Activated T-helper 1 cell treated with anti-CD3 and anti-CD28 coated beads, Interleukin-12 subunit alpha, Interleukin-12 subunit beta, Interleukin-2, Interleukin-4 antibody, amounts not matched to agents 30 ng/mL and 10 ng/mL and 1 ng/mL, durations not matched to agents 14 hours and 24 hours and 36 hours (primary cell): ENCODE measurements at regions of chr22 and their contacts with region 1.

Region 1: DNA sequence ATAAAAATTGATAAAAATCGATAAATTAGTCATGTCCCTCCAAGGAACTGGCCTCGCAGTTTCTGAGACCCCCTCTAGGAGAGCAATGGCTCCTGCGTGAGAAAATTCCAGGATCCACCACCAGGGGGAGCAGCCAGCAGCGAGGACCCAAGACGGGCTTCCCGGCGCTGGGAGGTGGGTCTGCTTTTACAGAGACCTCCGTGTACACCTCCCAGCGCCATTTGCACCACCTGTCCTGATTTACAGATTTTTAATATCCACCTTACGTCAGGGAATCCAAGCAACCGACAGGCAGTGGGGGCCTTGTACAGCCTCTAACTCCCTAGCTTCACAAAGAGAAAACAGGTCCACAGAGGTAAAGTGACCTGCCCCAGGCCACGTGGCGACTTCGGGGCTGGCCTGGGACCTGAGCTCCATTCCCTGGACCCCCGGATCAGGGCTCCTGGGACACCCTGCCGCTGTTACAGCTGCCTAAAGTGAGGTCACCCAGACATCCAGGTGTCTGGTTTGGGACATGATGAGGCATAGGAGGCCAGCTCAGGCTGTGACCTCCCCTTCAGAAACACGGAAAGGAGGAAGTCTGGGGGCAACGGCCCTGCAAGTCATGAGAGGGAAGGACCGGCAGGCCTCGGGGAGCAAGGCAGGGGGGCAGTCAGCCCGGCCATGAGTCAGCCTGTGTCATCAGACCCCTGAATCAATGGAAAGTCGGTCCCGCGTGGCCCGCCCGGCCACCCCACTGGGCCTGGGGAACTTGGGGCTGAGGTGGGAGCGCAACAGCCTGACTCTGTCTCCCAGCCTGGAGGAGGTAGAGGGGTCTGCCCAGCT is 3.5 kb downstream of the OSM start:
- DNase-seq: peak; percentile 67
- H3K4me3 Mint-ChIP-seq: peak overlapping the region; percentile 95
- H3K27ac Mint-ChIP-seq: peak overlapping the region; percentile 94
- H3K4me1 Mint-ChIP-seq: peaks cover 64% of the 10 kb centered on the region
- H3K27me3 Mint-ChIP-seq: no peaks in the 10 kb centered on the region

Region 2: DNA sequence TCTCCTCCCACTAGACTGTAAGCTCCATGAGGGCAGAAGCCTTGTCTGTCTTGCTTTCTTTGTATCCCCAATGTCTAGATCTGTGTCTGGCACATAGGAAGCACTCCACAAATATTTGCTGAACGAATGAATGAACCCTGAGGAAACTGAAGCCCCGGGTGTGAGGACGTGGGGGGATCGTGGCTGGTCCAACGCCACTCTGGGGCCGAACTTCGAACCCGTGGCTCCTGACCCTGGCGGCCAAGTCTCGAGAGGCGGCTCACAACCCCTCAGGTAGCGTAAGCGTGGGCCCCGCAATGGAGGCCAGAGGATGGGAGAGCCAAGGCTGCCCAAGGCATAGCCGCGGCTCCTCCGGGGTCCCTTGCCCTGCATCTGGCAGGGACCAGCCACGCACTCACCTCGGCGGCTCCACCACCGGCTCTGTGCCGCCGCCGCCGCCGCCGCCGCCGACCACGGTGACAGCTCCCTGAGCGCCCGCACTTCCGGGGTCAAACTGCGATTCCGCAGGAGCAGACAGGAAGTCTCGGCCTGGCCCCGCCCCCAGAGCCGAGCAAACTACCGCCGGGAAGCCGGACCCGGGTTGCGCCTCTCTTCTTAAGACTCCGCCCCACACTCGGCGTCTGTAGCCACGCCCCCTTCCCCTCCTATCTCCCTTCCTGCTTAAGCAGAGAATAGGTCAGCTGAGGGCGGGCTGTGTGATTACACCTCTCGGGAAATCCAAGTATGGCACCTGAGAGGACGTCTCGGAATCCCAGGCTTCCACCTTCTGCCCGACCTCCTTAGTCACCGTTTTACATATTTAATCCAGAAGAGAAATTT is 425.1 kb before region 1 on chr22 and contains the start of gene ASCC2:
- intact Hi-C with region 1: loop called (anchors 2 kb)
- DNase-seq: peak; percentile 99
- H3K4me3 Mint-ChIP-seq: peak within 1 kb of the TSS; percentile 89
- H3K27ac Mint-ChIP-seq: peak within 1 kb of the TSS; percentile 86
- H3K4me1 Mint-ChIP-seq: peaks cover 33% of the 10 kb centered on the region
- H3K27me3 Mint-ChIP-seq: peaks cover 5% of the 10 kb centered on the region
- total RNA-seq, gene ASCC2: 84.5 and 90.9 TPM in 2 replicates

Region 3: DNA sequence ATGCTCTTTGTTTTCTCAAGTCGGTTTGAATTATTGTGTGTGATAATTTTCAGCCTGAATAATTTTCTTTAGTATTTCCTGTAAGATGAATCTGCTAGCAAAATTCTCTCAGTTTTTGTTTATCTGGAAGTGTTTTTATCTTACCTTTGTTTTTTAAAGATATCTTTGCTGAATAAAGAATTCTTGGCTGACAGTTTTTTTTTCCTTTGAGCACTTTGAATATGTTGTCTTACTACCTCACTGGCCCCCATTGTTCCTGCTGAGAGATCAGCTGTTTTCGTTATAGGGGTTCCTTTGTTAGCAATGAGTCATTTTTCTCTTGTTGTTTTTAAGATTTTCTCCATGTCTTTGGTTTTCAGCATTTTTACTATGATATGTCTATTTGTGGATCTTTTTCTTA is 119.9 kb before region 1 on chr22:
- intact Hi-C with region 1: no loop called
- DNase-seq: no peak
- H3K4me3 Mint-ChIP-seq: no peak overlapping the region
- H3K27ac Mint-ChIP-seq: no peak overlapping the region
- H3K4me1 Mint-ChIP-seq: peaks cover 4% of the 10 kb centered on the region
- H3K27me3 Mint-ChIP-seq: no peaks in the 10 kb centered on the region

Region 4: DNA sequence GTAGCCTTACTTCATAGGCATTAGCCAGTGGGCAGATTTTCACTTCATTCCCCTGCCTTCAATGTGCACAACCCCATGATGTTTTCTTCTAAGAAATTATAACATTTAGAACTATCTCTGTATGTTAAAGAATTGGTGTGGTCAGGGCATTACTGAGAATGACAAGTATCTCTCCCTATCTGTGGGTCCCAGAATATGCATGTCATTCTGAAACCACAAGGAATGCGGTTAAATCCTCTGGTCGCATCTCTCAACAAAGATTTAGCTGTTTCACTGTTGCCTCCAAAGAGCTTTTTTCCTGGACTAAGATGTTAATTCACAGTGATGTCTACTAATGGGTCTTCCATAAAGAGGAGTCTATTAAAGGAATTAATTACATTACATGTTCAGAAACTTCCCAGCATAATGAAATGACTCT is 79.3 kb before region 1 on chr22:
- intact Hi-C with region 1: loop called (anchors 2 kb)
- DNase-seq: peak; percentile 25
- H3K4me3 Mint-ChIP-seq: peak overlapping the region; percentile 69
- H3K27ac Mint-ChIP-seq: peak overlapping the region; percentile 95
- H3K4me1 Mint-ChIP-seq: peaks cover 96% of the 10 kb centered on the region
- H3K27me3 Mint-ChIP-seq: no peaks in the 10 kb centered on the region

Region 5: DNA sequence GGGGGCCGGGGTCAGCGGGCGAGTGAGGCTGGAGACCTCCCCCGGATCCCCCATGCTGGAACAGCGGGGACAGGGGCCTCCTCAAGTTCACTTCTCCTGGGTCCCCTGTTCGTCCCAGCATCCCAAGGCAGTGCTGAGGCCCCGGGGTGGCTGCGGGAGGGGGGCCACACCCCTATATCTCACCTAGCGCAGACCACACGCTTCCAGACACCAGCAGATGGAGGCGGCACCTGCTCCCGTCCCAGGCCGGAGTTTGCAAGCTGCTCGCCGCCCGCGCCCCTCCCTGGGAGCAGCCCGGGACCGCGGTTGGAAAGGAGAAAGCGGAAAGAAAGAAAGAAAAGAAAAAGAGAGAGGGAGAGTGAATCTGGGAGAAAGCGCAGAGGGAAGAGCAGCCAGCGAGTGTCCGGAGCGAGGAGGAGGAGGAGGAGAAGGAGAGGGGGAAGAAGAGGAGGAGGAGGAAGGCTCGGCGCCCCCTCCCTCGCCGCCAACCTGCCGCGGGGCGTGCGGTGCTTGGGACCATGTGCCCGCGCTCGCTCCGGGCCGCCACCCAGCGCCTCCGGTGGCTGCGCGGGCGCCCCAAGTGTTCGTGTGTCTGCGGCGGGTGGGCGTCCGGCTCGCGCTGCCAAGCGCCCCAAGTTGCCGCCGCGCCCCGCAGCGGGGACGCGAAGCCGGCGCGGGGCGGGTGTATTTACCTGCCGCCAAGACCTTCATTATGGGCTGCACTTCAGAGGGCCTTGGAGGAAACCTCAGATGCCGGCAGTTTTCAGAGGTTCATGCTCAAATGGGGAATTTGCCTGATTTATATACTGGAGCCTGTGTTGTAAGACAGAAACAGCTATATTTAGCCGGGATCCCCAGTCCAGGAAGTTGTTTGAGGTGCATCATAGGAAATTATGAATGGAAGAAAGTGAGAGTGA is 16.9 kb before region 1 on chr22 and contains the start of gene LIF:
- intact Hi-C with region 1: loop called (anchors 1 kb)
- DNase-seq: peak; percentile 53
- H3K4me3 Mint-ChIP-seq: peak within 1 kb of the TSS; percentile 100
- H3K27ac Mint-ChIP-seq: peak within 1 kb of the TSS; percentile 100
- H3K4me1 Mint-ChIP-seq: peaks cover 64% of the 10 kb centered on the region
- H3K27me3 Mint-ChIP-seq: no peaks in the 10 kb centered on the region
- total RNA-seq, gene LIF: 450 and 455 TPM in 2 replicates

Region 6: DNA sequence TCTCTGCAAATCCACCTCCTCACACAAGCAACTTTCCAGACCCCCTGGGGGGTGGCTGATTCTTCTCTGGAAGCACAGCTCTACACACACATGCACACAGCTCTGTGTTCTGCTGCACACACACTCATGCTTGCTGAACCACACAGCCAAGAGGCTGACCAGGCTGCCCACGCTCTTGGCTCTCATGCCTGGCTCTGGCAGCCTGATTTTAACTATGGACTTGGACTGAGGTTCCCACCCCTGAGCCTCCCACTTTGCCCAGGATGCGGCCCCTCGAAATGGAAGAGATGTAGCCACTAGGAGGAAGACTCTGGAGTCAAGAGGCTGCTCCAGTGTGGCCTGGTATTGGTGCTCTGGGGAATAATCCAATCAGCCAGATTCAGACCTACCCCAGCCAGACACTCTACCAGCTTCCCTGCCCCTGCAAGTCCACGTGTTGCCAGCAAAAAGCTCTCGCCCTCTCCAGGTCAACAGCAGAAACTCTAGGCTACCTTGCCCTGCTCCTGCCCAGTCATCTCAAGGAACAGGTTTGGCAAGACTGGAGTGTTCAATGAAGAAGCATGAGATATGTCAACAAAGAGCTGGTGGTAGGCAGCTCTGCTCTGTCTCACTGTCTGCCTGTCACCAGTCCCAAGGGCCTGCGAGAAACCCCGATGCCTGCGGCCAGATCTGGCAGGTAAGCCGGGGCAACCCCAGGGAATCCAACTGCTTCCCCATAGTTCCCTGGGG is 35.0 kb after region 1 on chr22:
- intact Hi-C with region 1: no loop called
- DNase-seq: no peak
- H3K4me3 Mint-ChIP-seq: no peak overlapping the region
- H3K27ac Mint-ChIP-seq: peak overlapping the region; percentile 23
- H3K4me1 Mint-ChIP-seq: peaks cover 57% of the 10 kb centered on the region
- H3K27me3 Mint-ChIP-seq: no peaks in the 10 kb centered on the region

Region 7: DNA sequence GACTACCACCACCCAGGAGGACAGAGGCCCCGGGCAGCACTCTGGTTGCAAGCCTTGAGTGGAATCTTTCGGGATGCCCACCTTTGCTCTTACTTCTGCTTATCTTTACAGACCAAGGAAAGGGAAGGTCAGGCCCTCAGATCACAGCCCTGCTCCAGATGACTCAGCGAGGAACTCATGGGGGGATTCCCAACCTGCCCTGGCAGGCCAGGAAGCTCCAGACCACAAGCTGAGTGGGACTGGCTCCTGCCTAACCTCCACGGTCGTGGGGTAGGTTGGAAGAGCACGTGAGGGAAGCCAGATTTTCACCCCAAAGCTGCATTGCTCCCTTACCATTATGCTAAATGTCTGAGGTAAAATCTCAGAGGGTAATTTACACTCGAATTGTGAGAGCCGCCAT is 51.8 kb after region 1 on chr22:
- intact Hi-C with region 1: no loop called
- DNase-seq: peak; percentile 36
- H3K4me3 Mint-ChIP-seq: peak overlapping the region; percentile 45
- H3K27ac Mint-ChIP-seq: peak overlapping the region; percentile 66
- H3K4me1 Mint-ChIP-seq: peaks cover 91% of the 10 kb centered on the region
- H3K27me3 Mint-ChIP-seq: no peaks in the 10 kb centered on the region

Region 8: DNA sequence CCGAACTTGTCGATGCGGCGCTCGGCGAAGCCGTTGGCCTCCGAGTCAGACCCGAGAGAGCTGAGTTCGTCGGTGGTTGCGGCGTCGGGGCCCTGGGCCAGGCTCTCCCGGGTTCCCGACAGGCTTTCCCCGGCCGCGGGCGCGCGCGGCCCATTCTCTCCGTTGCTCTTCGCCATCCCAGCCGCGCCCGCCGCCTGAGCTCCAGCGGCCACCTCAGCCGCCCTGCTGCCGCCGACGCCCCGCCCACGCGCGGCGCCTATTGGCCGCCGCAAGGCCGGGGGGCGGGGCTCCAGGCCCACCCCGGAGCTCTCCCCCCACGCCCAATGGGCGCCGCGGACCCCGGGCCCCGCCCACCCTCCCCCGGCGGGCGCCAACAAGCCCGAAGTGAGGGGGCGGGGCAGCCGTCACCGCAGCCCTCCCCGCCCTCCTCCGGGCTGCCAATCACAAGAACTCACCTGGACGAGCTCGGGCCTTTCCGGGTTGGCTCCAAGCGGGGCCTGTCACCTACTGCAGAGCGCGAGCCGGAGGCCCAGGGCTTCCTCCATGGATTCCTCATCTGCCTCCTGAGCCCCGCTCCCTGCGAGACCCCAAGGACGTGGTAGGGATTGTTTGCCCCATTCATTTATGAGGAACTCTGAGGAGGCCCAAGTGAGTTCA is 63.7 kb after region 1 on chr22 and contains the start of gene TBC1D10A:
- intact Hi-C with region 1: loop called (anchors 1 kb)
- DNase-seq: peak; percentile 90
- H3K4me3 Mint-ChIP-seq: peak within 1 kb of the TSS; percentile 89
- H3K27ac Mint-ChIP-seq: peak within 1 kb of the TSS; percentile 60
- H3K4me1 Mint-ChIP-seq: peaks cover 48% of the 10 kb centered on the region
- H3K27me3 Mint-ChIP-seq: no peaks in the 10 kb centered on the region
- total RNA-seq, gene TBC1D10A: 17.3 and 24.9 TPM in 2 replicates

Region 9: DNA sequence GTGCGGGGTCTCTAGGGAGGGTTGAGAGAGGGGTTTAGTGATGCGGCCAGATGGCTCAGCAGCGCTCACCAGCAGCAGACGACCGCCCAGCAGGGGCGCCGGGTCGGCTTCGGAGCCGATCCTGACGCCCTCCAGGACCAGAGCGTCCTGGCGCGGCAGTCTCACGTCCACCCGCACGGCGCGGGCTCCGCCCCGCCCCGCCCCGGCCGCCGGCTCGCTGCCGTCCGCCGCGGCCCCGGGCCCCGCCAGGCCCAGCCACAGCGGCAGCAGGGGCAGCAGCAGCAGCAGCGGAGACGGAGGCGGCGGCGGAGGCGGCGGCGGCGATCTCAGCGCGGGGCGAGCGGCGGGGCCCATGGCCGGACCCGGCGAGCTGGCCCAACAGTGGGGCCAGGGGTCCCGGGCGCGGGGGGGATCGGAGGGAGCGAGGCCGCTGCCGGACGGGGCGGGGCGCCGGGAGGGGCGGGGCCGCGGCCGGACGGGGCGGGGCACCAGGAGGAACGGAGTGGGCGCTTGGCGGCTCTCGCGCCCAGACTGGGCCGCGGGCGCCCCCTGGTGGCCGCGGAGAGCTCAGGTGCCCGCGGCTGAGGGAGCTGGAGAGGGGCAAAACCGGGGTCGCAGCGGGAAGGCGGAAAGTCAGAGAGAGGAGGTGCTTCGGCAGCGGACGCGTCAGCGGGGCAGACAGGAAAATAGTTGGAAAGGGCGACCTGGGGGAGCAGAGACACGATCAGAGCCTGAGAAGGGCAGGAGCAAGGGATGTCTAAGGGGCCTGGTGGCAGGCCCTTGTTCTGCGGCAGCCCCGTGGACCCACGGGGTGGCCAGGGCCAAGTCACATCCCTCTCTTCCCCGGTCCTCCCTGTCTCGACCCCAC is 124.1 kb after region 1 on chr22 and contains the start of gene RNF215:
- intact Hi-C with region 1: loop called (anchors 1 kb)
- DNase-seq: peak; percentile 79
- H3K4me3 Mint-ChIP-seq: peak within 1 kb of the TSS; percentile 84
- H3K27ac Mint-ChIP-seq: peak within 1 kb of the TSS; percentile 56
- H3K4me1 Mint-ChIP-seq: peaks cover 25% of the 10 kb centered on the region
- H3K27me3 Mint-ChIP-seq: no peaks in the 10 kb centered on the region
- total RNA-seq, gene RNF215: 10.3 and 13.2 TPM in 2 replicates